CD8-positive, alpha-beta memory T cell (primary cell): ENCODE measurements at regions of chr9 and their contacts with region 1.

Region 1: DNA sequence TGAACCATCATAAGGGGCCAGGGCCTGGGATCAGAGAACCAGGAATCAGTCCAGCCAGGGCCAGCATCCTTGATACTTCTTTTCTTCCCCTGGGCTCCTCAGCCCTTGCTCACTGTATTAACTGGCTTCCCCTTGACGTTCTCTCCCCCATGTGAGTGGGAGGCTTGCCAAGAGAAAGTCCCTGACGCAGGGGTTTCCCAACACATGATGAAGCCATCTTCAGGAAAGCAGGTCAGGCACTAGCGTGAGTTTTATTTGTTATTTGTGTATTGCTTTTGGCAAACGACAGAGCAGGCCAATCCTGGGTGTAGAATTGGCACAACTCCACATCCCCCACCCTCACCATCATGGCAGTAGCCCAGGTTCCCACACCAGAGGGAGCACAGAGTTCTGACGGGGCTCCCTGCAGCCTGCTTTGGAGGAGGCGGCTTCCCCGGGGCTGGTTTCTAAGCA is 165.5 kb upstream of the NFIL3 start:
- DNase-seq: no peak
- H3K4me3 ChIP-seq: no peak overlapping the region
- H3K4me3 Mint-ChIP-seq: no peak overlapping the region
- H3K27ac ChIP-seq: no peak overlapping the region
- H3K27ac Mint-ChIP-seq: no peak overlapping the region
- H3K4me1 ChIP-seq: no peaks in the 10 kb centered on the region
- H3K4me1 Mint-ChIP-seq: no peaks in the 10 kb centered on the region
- H3K27me3 ChIP-seq: no peaks in the 10 kb centered on the region
- H3K27me3 Mint-ChIP-seq: peaks cover 4 to 8% of the 10 kb centered on the region in 2 donors

Region 2: GRCh38 chr9:90379771-90380170 is 1209.4 kb before region 1 on chr9:
- CTCF ChIA-PET with region 1: no interaction called
- POLR2A ChIA-PET with region 1: no interaction called
- DNase-seq: no peak
- H3K4me3 ChIP-seq: no peak overlapping the region
- H3K4me3 Mint-ChIP-seq: no peak overlapping the region
- H3K27ac ChIP-seq: no peak overlapping the region
- H3K27ac Mint-ChIP-seq: no peak overlapping the region
- H3K4me1 ChIP-seq: no peaks in the 10 kb centered on the region
- H3K4me1 Mint-ChIP-seq: no peaks in the 10 kb centered on the region
- H3K27me3 ChIP-seq: no peaks in the 10 kb centered on the region
- H3K27me3 Mint-ChIP-seq: peaks cover 4 to 15% of the 10 kb centered on the region in 2 donors

Region 3: DNA sequence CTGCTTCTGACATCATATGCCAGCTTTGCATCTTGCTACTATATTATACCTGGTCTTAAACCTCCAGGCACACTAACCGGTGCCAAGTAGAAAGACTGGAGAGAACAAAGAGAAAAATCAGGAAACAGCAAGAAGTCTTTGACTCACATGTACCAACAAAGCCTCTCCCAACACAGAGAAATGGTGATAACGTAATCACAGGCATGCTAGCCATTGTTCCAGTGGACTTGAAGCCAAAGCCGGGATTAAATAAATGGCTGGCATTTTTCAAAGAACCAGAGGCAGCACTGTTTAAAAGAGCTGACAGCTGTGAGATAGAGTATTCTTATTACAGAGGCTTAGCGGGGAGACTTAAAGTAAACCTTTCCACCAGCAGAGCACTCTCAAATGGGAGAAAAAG is 17.1 kb before region 1 on chr9:
- CTCF ChIA-PET with region 1: no interaction called
- POLR2A ChIA-PET with region 1: interaction called, 10 read pairs
- DNase-seq: no peak
- H3K4me3 ChIP-seq: no peak overlapping the region
- H3K4me3 Mint-ChIP-seq: no peak overlapping the region
- H3K27ac ChIP-seq: no peak overlapping the region
- H3K27ac Mint-ChIP-seq: no peak overlapping the region
- H3K4me1 ChIP-seq: no peaks in the 10 kb centered on the region
- H3K4me1 Mint-ChIP-seq: no peaks in the 10 kb centered on the region
- H3K27me3 ChIP-seq: no peaks in the 10 kb centered on the region
- H3K27me3 Mint-ChIP-seq: peaks cover 14 to 18% of the 10 kb centered on the region in 2 donors